Activated CD4-positive, alpha-beta T cell treated with anti-CD3 and anti-CD28 coated beads, Interleukin-2, amount 10 ng/mL, durations not matched to agents 24 days and 14 days (primary cell): ENCODE measurements at regions of chr10 and their contacts with region 1.

Region 1: GRCh38 chr10:11270135-11270857 is 252.6 kb downstream of the CELF2 start:
- DNase-seq: peak; percentile 87
- H3K4me3 Mint-ChIP-seq: no peak overlapping the region
- H3K27ac Mint-ChIP-seq: peak overlapping the region; percentile 78
- H3K4me1 Mint-ChIP-seq: peaks cover 50% of the 10 kb centered on the region
- H3K27me3 Mint-ChIP-seq: no peaks in the 10 kb centered on the region

Region 2: GRCh38 chr10:11017570-11018431 is 252.5 kb before region 1 on chr10 and contains the start of gene CELF2:
- intact Hi-C with region 1: loop called (anchors 5 kb)
- DNase-seq: peak; percentile 85
- H3K4me3 Mint-ChIP-seq: peak within 1 kb of the TSS; percentile 74
- H3K27ac Mint-ChIP-seq: peak within 1 kb of the TSS; percentile 27
- H3K4me1 Mint-ChIP-seq: peaks cover 15% of the 10 kb centered on the region
- H3K27me3 Mint-ChIP-seq: peaks cover 78% of the 10 kb centered on the region
- total RNA-seq, gene CELF2: 95.5 and 98.4 TPM in 2 replicates

Region 3: DNA sequence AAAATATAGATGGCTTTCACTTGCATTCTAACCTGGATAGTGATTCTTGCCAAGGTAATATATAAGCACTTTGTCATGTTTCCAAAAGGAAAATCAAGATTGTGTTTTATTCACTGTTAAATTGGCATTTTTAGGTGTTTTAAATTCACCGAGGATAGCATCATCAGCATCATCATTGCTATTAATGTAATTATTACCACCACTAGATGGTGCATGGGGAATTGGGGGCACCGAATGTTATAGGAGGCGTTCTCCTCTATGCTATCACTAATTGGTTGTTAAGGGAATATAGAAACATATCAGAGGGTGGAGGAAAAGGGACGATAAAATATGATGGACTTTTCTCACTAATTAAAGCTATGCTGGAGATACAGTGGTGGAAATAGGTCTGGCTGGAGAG is 157.1 kb before region 1 on chr10:
- intact Hi-C with region 1: loop called (anchors 1 kb)
- DNase-seq: peak; percentile 68
- H3K4me3 Mint-ChIP-seq: no peak overlapping the region
- H3K27ac Mint-ChIP-seq: no peak overlapping the region
- H3K4me1 Mint-ChIP-seq: peaks cover 8% of the 10 kb centered on the region
- H3K27me3 Mint-ChIP-seq: peaks cover 7% of the 10 kb centered on the region